HEK293T (cell line): ENCODE measurements at regions of chr17 and their contacts with region 1.

Region 1: GRCh38 chr17:64661976-64662773 is at the start of gene SMURF2:
- DNase-seq: peak; percentile 83

Region 2: DNA sequence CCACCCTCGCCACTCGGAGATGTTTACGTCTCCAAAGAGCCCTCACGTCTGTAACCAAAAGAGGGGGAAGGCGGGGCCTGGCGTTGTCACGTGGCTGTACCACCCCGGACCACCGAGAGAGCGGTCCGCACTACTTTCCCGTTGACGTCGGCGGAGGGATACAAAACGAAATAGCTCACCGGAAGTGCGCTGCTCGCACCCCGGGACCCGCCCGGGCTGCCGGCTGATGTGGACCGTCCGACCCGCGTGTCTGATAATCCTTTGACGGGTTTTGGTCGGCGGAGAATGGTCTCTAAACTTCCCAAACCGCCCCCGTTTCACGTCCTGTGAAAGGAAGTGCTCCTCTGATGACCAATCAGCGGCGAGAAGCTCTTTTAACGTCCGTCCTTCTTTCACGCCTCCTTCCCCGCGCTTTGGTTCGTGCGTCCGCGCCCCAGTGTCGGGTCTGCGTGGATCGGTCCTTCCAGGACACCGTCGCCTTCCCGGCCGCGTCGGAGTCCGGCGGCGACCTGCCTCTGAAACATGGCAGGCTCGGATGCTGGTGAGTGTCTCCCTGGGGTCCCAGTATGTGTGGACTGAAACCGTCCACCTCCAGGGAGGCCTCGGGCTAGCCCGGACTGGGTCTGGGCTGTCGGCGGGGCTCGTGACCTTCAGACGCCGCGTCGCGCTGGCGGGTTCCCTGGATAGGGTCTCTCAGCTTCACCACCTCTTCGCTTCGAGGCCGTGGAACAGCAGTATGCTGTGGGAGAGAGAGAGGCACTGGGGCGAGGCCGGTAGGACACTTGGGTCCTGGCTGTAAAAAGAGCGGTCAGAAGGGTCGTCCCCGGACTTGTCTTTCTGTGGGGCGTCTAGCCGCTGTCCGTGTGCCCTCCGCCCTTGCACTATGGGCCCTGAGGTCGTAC is 155.3 kb before region 1 on chr17 and contains the start of gene CEP95:
- CTCF ChIA-PET with region 1: no interaction called
- POLR2A ChIA-PET with region 1: interaction called, 12 read pairs
- DNase-seq: no peak